Psoas muscle (tissue), 8 donors: ENCODE measurements at regions of chr5 and their contacts with region 1.

Region 1: GRCh38 chr5:77143998-77144836 is 57.1 kb upstream of the ZBED3 start:
- DNase-seq: peak; percentile 53 to 80
- ATAC-seq: peak; percentile 72 to 94 (median 86)
- H3K4me3 ChIP-seq: no peak overlapping the region
- H3K27ac ChIP-seq: no peak overlapping the region
- H3K4me1 ChIP-seq: no peaks in the 10 kb centered on the region
- H3K27me3 ChIP-seq: no peaks in the 10 kb centered on the region
- CTCF ChIP-seq: peak; percentile 88

Region 2: GRCh38 chr5:77239126-77239741 is 95.0 kb after region 1 on chr5:
- intact Hi-C with region 1: loop called in 1 of 2 experiments (anchors 2 kb)
- DNase-seq: no peak
- ATAC-seq: no peak
- H3K4me3 ChIP-seq: no peak overlapping the region
- H3K27ac ChIP-seq: no peak overlapping the region
- H3K4me1 ChIP-seq: no peaks in the 10 kb centered on the region
- H3K27me3 ChIP-seq: no peaks in the 10 kb centered on the region
- CTCF ChIP-seq: peak; percentile 27